Transverse colon (tissue), 4 donors: ENCODE measurements at regions of chr21 and their contacts with region 1.

Region 1: DNA sequence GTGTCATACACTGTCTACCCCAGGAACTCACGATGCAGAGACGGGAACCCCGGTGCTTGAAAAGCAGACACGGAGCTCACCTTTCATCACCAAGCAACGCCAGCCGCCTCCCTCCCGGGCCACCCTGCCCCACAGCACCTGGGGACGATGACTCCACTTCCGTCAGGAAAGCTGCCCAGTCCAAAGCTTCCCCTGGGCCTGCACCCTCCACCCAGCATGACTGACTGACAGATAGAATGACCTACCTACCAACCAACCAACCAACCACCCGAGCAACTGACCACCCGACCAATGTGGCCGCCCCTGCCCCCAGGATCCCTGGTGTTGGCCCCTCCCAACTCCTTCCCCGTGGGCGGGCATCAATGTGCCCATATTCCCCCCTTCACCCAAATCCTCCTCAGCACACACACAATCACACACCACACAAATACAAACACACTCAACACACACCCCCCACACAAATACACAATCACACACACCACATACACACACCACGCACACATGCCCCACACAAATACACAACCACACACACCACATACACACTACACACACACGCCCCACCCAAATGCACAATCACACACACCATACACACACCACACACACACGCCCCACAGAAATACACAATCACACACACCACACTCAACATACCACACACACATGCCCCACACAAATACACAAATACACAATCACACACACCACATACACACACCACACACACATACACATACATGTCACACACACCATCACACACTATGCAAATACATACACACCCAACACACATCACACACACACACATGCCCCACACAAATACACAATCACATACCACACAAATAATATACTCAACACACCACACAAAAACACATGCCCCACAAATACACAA is 50.4 kb downstream of the PRDM15 start:
- DNase-seq: no peak
- H3K4me3 ChIP-seq: no peak overlapping the region
- H3K27ac ChIP-seq: no peak overlapping the region
- H3K4me1 ChIP-seq: no peaks in the 10 kb centered on the region
- H3K27me3 ChIP-seq: no peaks in the 10 kb centered on the region
- CTCF ChIP-seq: no peak
- EP300 ChIP-seq: no peak
- POLR2A ChIP-seq: no peak

Region 2: DNA sequence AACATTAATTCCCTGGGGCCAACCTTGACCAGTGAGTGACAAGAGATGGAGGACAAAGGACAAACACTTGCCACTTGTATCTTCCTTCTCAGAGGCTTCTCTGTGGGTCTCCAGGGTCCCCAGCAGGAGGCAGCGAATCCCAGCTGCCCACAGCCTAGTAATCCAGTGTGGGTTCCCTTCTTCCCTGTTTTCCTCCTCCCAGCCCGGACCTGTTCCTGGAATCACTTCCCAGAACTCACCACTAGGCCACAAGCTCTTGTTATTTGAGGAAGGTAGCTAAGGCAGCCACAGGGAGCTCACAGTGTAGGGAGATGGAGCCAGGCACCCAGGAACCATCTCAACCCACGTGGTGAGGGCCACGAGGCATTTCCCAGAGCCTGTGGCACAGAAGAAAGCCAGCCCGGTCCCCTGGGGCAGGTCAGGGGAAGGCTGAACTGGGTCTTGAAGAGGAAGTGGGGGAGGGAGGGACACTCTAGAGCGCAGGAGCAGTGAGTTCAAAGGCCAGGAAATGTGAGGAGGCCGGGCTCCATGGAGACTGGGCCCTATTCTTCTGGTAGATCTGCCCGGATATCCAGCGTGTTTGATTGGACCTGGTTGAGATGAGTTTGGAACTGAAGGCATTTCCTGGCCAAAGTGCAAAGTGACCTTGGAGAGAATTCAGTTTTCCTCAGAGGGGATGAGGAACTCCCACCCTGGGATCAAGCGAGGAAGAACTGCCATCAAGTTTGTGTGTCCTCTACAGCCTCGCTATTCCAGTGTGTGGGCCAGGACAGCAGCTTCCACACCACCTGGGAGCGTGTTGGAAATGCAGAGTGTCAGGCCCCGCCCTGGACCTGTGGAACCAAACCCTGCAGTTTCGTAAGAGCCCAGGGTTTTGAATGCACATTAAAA is 145.4 kb after region 1 on chr21:
- in situ Hi-C with region 1: no loop called
- intact Hi-C with region 1: no loop called
- DNase-seq: no peak
- H3K4me3 ChIP-seq: no peak overlapping the region
- H3K27ac ChIP-seq: peak overlapping the region in 2 of 4 donors; percentile 16 to 33
- H3K4me1 ChIP-seq: peaks cover 0 to 15% (median 9%) of the 10 kb centered on the region in 4 donors
- H3K27me3 ChIP-seq: no peaks in the 10 kb centered on the region
- CTCF ChIP-seq: peak in 3 of 5 experiments; percentile 14 to 45 (median 45)
- EP300 ChIP-seq: no peak
- POLR2A ChIP-seq: no peak

Region 3: DNA sequence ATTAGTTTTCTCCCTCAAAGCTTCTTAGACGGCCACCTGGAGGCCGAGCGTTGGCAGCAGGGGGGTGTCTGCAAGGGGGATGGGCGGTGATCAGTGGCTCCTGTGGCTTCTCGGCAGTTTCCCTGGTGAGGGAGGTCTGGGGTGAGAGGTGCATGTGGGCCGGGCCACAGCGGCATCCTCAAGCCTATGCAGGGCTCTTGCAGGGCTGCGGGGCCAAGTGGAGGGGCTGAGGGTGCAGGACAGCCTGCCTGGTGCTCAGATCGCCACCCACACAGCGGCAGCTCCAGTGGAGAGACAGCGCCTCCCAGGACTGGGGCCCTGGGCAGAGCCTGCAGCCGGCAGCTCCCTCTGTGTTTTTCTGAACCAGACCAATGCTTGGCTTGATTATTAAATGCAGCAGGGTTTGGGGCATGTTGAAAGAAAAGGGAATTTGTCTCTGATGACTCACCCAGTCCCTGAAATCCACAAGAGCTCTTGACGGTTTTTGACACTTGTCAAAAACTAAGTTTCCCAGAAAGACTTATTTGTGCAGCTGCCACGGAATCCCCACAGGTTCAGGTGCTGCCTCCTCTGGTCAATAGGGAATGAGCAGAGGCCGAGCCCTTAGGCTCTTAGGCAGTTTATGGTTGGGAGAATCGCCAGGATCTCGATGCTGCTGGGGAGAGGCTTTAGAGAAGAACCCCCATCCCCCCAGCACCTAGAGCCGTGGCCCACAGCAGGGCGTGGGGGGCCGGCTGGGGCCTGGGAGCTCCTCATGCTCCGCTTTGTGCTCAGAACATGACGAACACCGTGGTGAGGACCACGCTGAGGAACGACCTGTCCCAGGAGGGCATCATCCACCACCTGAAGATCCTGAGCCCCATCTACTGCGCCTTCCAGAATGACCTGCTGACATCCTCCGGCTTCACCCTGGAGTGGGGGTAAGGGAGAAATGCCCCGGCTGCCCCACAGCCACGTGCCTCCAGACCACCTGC is 297.1 kb after region 1 on chr21:
- in situ Hi-C with region 1: loop called in 3 of 4 experiments (anchors 10 to 25 kb)
- intact Hi-C with region 1: no loop called
- DNase-seq: no peak
- H3K4me3 ChIP-seq: no peak overlapping the region
- H3K27ac ChIP-seq: no peak overlapping the region
- H3K4me1 ChIP-seq: no peaks in the 10 kb centered on the region
- H3K27me3 ChIP-seq: peaks cover 25% of the 10 kb centered on the region
- CTCF ChIP-seq: no peak
- EP300 ChIP-seq: no peak
- POLR2A ChIP-seq: no peak